ENCODE measurements at regions of chr10 and their contacts with region 1.

Region 1: GRCh38 chr10:100858747-100859483 is 53.8 kb upstream of the SLF2 start:
- H3K4me3 ChIP-seq: no peak overlapping the region
- H3K27ac ChIP-seq: no peak overlapping the region
- H3K4me1 ChIP-seq: no peaks in the 10 kb centered on the region
- CTCF ChIP-seq: no peak

Region 2: GRCh38 chr10:100730725-100731406 is 128.0 kb before region 1 on chr10:
- CTCF ChIA-PET with region 1: no interaction called
- POLR2A ChIA-PET with region 1: no interaction called
- H3K4me3 ChIP-seq: peak overlapping the region; percentile 24
- H3K27ac ChIP-seq: no peak overlapping the region
- H3K4me1 ChIP-seq: peaks cover 5% of the 10 kb centered on the region; the same call in 1 of the 2 replicates
- CTCF ChIP-seq: no peak

Region 3: DNA sequence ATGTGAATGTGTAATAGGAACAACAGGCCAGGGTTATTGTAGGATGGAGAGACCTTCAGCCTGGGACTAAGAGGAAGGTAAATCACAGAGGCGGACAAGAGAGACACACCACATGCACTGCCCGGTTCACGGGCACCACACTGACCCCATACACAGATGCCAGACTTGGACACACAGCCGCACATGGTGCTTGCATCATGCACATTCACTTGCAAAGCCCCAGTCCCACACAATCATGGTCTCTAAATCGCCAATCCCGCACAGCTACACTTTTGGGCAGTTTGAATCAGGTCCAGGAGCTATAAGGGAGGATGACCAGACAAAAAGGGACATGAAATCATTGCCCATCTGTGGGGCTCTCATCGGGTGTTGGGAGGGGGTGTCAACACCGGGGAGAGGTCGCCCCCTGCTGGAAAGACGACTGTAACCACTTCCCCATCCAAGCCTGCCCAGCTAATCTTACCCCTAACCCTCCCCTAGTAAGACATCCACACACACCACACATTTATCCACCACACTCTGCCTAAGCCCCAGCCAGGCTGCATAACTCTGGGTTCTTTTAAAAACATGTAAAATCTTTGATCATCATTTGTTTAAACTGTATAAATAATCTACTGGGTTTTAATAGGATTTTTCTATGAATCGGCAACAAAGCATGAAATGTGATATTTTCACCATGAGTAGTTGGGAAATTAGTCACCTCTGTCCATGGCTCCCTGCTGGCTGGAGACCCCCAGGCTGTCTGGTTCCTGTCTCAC is 13.3 kb after region 1 on chr10:
- CTCF ChIA-PET with region 1: interaction called, 11 read pairs
- POLR2A ChIA-PET with region 1: no interaction called
- H3K4me3 ChIP-seq: no peak overlapping the region
- H3K27ac ChIP-seq: no peak overlapping the region
- H3K4me1 ChIP-seq: no peaks in the 10 kb centered on the region
- CTCF ChIP-seq: peak; percentile 85